Mucosa of descending colon (tissue), 3 donors: ENCODE measurements at regions of chr9 and their contacts with region 1.

Region 1: GRCh38 chr9:121326130-121326838 is 43.8 kb downstream of the STOM start:
- DNase-seq: peak in 2 of 3 donors; percentile 45 to 78
- ATAC-seq: peak; percentile 11
- H3K4me3 ChIP-seq: no peak overlapping the region
- H3K4me1 ChIP-seq: peaks cover 10% of the 10 kb centered on the region
- CTCF ChIP-seq: no peak

Region 2: DNA sequence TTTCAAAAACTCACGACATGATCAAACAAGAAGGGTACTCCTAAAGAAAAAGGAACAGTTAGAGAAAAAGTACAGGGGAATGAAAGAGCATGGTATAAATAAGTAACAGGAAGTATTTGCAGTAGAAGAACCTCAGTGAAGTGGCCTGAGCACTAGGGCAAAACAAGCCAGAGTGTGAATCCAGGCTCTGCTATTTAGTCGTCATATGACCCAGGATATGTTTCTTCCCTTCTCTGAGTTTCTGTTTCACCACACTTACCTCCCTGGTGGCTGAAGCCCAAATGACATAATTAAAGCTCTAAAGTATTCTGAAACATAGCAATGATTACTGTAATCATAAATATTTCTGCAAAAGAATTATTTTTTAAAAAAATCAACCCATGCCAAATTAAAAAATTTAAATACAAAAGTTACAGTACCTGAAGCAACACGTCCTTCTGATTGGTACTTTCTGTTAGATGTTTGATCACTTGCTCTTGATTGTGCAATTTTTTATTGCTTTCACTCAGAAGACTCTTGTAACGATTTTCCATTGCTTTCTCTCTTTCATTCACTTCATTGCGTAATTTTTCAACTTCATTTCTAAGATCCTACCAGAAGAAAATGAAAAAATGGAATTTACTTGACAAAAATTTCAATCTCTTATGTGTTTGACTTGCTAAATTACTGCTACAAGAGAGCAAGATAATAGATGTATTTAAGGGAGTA is 835.2 kb before region 1 on chr9:
- intact Hi-C with region 1: no loop called
- DNase-seq: no peak
- ATAC-seq: peak; percentile 50
- H3K4me3 ChIP-seq: no peak overlapping the region
- H3K4me1 ChIP-seq: no peaks in the 10 kb centered on the region
- CTCF ChIP-seq: no peak

Region 3: GRCh38 chr9:121138973-121139372 is 187.3 kb before region 1 on chr9:
- intact Hi-C with region 1: no loop called
- DNase-seq: no peak
- ATAC-seq: no peak
- H3K4me3 ChIP-seq: no peak overlapping the region
- H3K4me1 ChIP-seq: no peaks in the 10 kb centered on the region
- CTCF ChIP-seq: no peak

Region 4: DNA sequence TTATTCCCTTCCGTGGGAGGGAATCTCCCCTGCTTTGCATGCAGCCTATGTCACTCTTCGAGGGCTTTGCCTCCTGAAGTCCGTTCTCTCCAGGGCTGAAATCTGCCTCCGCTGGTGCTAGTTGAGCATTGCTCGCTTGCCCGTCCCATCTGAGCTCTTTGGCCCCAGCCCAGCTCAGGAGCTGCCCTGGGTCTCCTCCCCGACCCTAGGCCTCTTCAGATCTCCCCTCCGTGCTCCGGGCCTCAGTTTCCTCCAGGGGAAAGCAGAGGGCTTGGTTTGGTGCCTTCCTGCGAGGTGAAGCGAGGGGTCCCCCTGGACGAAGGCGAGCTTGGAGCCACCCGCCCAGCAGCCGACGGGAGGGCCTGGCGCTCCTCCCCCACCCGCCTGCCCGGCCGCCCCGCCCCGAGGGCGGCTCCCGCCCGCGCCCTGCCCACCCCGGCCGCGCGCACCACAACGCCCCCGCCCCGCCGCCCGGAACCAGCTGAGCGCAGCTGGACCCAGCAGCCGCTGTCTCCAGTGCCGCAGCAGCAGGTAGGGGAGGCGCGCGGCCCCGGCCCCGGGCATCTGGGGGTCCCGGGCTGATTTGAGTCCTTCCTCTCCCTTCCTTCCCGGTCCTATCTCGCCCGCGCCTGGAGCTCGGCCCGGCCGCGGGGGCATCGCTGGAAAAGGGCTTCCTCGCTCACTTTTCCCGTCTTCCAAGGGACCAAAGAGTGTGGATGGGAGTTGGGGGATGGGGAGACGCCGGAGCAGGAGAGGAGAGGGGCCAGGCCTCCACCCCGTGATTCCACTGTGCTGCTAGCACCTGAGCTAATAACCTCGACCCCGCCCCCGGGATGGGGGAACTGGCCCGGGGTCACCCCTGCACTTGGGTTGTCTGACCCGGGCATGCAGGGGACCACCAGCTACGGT is 58.3 kb before region 1 on chr9 and contains the start of gene GSN:
- intact Hi-C with region 1: loop called in 1 of 2 experiments (anchors 10 kb)
- DNase-seq: peak; percentile 87 to 93 (median 90)
- ATAC-seq: peak; percentile 91
- H3K4me3 ChIP-seq: peak within 1 kb of the TSS; percentile 50
- H3K4me1 ChIP-seq: peaks cover 38% of the 10 kb centered on the region
- CTCF ChIP-seq: no peak
- total RNA-seq, gene GSN: 443 to 952 (median 937) TPM

Region 5: DNA sequence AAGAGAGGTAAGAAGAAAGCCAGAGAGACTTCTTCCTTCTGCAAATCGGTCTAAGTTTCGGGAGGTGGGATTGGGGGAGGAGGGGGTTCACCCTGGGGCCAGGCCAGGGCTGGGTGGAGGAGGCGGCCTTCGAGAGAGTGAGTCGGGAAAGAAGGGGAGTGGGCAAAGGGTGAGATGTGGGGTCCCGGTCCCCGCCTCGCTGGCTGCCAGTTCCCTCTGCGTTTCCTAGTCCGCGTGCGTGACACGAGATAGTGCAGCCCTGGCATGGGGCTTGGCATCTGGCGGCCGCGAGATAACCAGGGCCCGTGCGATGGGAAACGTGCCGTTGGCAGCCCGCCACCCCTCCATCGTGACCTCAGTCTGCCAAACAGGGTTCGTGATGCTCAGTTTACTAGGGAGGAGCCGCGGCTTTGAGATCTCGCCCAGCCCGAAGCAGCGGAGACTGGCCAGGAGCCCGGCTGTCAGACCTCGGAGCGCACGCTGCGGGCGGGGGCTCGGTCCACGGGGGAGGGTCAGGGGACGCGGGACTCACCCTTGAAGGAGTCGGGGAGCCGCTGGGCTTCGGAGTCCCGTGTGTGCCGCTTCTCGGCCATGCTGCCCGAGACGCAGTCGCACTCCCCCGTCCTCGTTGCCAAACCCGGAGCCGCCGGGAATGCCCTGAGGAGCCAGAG is 43.4 kb after region 1 on chr9 and contains the start of gene STOM:
- intact Hi-C with region 1: loop called in 1 of 2 experiments (anchors 10 kb)
- DNase-seq: peak; percentile 73 to 90 (median 82)
- ATAC-seq: peak; percentile 64
- H3K4me3 ChIP-seq: peak within 1 kb of the TSS; percentile 25
- H3K4me1 ChIP-seq: peaks cover 18% of the 10 kb centered on the region
- CTCF ChIP-seq: no peak
- total RNA-seq, gene STOM: 79.7 to 335 (median 199) TPM